Common myeloid progenitor, CD34-positive (primary cell): ENCODE measurements at regions of chr5 and their contacts with region 1.

Region 1: DNA sequence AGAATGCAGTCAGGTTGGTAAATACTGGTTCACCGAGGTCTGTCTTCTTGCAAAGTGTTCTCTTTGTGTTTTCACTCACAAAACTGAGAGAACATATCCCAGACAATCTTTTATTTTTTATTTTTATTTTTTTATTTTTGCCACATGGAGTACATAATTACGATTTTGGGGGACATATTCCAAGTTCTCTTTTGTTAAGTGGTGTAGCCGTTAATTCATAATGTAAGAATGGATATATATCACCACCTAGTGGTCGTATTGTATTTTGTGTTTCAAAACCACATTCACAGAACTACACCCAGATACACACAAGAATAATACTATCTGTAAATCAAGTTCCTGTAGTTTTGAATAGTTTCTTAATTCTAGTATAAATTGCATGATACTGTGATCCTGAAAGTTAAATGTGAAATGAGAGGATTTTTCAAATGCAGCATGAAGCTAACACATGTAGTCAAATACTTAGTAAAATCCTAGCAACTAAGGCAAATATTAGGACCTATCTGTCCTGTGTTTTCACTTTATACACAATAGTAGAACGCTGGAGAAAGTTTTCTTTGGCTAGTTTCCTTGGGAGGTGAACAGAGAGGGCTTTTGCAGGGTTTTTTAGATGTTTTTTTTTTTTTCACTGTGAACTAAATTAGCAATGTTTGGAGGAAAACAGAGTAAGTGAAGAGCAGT is 92.7 kb downstream of the VCAN start:
- DNase-seq: peak; percentile 32 to 66 (median 65)
- H3K4me3 ChIP-seq: no peak overlapping the region
- H3K27ac ChIP-seq: no peak overlapping the region
- H3K4me1 ChIP-seq: no peaks in the 10 kb centered on the region
- H3K27me3 ChIP-seq: peaks cover 0 to 2% (median 0%) of the 10 kb centered on the region in 5 experiments

Region 2: GRCh38 chr5:82312373-82312856 is 1251.8 kb before region 1 on chr5:
- CTCF ChIA-PET with region 1: interaction called, 14 read pairs
- POLR2A ChIA-PET with region 1: no interaction called
- DNase-seq: peak; percentile 62 to 70 (median 64)
- H3K4me3 ChIP-seq: no peak overlapping the region
- H3K27ac ChIP-seq: no peak overlapping the region
- H3K4me1 ChIP-seq: peaks cover 9 to 44% (median 26%) of the 10 kb centered on the region in 4 experiments
- H3K27me3 ChIP-seq: no peaks in the 10 kb centered on the region

Region 3: GRCh38 chr5:82351754-82352145 is 1212.5 kb before region 1 on chr5:
- CTCF ChIA-PET with region 1: interaction called, 57 read pairs
- POLR2A ChIA-PET with region 1: no interaction called
- DNase-seq: peak; percentile 55 to 77 (median 68)
- H3K4me3 ChIP-seq: no peak overlapping the region
- H3K27ac ChIP-seq: no peak overlapping the region
- H3K4me1 ChIP-seq: peaks cover 3 to 13% (median 5%) of the 10 kb centered on the region in 4 experiments
- H3K27me3 ChIP-seq: no peaks in the 10 kb centered on the region

Region 4: DNA sequence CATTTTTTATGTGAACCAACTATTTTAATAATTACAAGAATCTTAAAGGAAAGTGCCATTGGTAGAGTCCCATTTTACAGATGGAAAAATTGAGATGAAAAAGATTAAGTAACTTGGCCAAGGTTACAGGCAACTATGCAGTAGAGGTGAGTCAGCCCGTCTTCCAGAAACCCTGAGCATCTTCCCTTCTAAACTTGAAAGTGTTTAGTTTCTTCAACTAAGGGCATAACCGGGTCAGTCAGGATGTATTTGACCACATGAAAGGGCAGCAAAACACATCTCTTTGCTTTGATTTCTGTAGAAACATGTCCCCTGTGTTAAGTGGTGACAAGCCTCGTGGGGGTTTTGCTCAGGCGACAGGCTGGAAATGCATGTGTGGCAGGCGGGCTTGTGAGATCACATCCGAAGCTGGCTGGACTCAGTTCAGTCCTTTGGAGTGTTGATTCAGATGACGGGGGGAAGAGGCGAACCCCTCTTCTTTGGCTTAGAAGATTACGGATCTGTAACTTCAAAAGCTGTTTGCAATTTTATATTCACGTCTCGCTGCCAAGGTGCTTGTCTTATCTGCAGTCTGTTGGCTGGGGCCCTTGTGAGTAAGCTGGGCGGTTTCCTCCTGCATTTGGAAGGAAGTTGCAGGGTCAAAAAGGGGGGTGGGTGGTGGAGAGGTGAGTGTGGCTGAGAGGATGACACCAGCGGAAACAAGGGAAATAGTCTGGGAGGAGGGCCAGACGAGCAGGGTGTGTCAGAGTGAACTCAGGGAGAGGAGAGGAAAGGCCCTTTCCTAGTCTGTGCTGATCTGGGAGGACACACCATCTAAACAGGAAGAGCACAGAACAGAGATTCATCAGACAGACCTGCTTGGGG is 1207.2 kb before region 1 on chr5:
- CTCF ChIA-PET with region 1: interaction called, 57 read pairs
- POLR2A ChIA-PET with region 1: no interaction called
- DNase-seq: peak; percentile 67 to 90 (median 81)
- H3K4me3 ChIP-seq: peak overlapping the region in 3 of 7 experiments; percentile 34 to 45 (median 34)
- H3K27ac ChIP-seq: peak overlapping the region in 1 of 2 experiments; percentile 52
- H3K4me1 ChIP-seq: peaks cover 2 to 27% (median 17%) of the 10 kb centered on the region in 4 experiments
- H3K27me3 ChIP-seq: no peaks in the 10 kb centered on the region

Region 5: DNA sequence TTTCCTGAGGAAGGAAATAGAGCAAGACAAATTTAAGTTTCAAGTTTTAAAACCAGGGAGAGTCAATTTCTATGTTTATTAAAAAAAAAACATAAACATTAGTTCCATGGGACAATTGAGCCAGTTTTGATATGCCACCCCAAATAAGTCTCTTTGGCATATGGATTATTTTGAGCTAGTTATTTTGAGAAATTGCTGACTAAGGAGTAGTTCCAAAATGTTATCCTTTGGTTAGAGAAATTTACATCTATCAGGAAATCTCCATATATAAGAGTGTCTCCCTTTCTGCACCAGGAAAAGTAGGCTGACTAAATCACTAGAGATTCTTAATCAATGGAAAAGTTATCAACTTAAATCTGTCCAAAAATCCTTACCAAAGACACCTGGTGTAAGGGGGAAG is 50.6 kb after region 1 on chr5:
- CTCF ChIA-PET with region 1: no interaction called
- POLR2A ChIA-PET with region 1: no interaction called
- DNase-seq: no peak
- H3K4me3 ChIP-seq: no peak overlapping the region
- H3K27ac ChIP-seq: no peak overlapping the region
- H3K4me1 ChIP-seq: no peaks in the 10 kb centered on the region
- H3K27me3 ChIP-seq: peaks cover 0 to 3% (median 0%) of the 10 kb centered on the region in 5 experiments